Head of caudate nucleus (tissue), 42 donors: ENCODE measurements at regions of chr16 and their contacts with region 1.

Region 1: DNA sequence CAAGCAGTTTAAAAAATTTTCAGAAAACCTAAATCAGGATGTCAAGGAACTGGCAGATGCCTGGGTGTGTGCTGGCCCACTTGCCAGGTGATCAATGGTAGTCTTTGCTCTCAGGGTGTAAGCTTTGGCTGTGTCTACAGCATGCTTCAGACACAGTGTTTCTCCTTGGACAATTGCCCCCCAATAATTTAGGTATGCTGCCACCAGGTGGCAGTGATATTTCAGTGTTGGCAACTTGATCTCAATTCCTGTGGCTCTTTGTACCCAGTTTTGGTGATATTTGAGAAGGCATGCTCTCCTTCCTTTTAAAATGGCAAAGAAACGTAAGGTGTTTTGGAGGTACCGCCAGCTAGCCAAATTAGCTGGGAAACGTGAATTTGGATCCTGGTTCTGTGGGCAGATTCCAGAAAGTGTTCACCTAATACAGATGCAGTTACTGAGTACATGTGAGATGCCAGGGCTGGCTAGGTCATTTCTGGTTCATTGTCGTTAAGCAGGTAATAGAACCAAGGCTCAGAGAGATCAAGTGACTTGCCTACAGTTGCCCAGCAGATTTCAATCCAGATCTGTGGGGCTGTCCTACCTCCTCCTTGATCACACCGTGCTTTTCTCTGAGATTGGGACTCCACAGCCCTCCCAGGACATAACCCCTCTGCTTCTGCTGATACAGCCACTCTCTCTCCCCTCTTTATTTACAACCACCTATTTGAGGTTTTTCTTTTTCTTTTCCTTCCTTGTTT is 155.6 kb upstream of the PLCG2 start:
- DNase-seq: peak in 33 of 42 donors; percentile 32 to 85 (median 63)

Region 2: DNA sequence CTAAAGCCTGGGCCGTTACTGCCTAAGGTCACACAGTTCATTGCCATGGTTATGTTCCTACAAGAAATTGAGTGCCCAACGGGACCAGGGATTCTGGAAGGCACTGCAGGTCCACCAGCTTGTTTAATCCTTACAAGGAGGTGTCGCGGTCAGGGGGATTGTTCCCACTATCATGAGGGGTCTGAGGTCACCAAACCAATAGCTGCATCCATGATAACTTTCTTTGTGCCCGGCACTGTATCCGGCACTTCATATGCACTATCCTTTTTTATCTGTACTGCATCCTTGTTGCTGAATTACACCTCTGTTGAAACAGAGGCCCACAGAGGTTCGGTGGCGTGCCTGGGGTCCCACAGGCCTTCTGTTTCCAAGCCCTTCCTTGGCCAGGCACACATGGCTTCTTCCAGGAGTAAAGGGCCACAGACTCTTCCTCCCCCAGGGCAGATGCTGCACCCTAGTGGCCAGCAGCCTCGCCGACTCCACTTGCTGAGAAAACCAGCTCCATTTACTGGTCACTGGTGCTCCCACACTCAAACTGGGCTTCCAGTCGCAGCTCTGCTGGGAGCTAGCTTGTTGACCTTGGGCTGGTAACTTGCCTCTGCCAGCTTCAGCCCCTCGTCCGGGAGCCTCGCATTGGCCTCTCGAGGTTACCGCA is 73.6 kb after region 1 on chr16:
- intact Hi-C with region 1: loop called (anchors 10 kb)
- DNase-seq: peak in 37 of 42 donors; percentile 34 to 81 (median 61)